Activated naive CD4-positive, alpha-beta T cell treated with anti-CD3 and anti-CD28 coated beads for 36 hours (primary cell): ENCODE measurements at regions of chrX and their contacts with region 1.

Region 1: GRCh38 chrX:119753571-119754257 is 4.7 kb upstream of the SOWAHD start:
- DNase-seq: peak; percentile 70
- H3K4me3 Mint-ChIP-seq: no peak overlapping the region
- H3K27ac Mint-ChIP-seq: peak overlapping the region; percentile 81
- H3K4me1 Mint-ChIP-seq: peaks cover 41% of the 10 kb centered on the region
- H3K27me3 Mint-ChIP-seq: no peaks in the 10 kb centered on the region

Region 2: GRCh38 chrX:119130911-119131310 is 622.8 kb before region 1 on chrX:
- CTCF ChIA-PET with region 1: no interaction called
- intact Hi-C with region 1: no loop called
- DNase-seq: no peak
- H3K4me3 Mint-ChIP-seq: no peak overlapping the region
- H3K27ac Mint-ChIP-seq: no peak overlapping the region
- H3K4me1 Mint-ChIP-seq: no peaks in the 10 kb centered on the region
- H3K27me3 Mint-ChIP-seq: no peaks in the 10 kb centered on the region

Region 3: DNA sequence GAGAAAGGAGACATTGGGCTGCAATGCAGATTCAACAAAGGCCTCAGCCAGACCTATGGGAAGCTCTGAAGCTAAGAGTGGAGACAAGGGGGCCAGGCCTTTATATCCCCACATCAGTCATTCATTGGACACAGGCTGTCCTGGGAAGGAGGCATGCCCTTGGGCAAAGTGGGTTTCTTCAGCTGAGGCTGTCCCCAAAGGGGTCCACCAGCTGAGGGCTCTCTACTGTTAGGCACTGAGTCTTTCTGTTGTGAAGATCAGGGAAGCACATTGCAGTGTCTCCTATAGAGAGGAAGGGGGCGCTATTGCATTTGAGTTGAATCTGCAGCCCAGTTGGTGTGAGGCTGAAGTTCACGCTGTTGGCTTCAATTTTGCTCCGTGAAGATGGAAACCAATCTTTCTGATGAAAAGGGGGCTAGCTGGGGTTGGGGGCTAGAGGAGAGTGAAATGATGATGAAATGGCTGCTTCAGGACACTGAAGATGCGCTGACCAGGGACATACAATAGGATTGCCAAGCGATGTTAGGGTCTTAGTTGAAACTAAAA is 237.5 kb before region 1 on chrX:
- CTCF ChIA-PET with region 1: interaction called, 5 read pairs
- intact Hi-C with region 1: loop called (anchors 1 kb)
- DNase-seq: peak; percentile 45
- H3K4me3 Mint-ChIP-seq: no peak overlapping the region
- H3K27ac Mint-ChIP-seq: no peak overlapping the region
- H3K4me1 Mint-ChIP-seq: no peaks in the 10 kb centered on the region
- H3K27me3 Mint-ChIP-seq: no peaks in the 10 kb centered on the region

Region 4: DNA sequence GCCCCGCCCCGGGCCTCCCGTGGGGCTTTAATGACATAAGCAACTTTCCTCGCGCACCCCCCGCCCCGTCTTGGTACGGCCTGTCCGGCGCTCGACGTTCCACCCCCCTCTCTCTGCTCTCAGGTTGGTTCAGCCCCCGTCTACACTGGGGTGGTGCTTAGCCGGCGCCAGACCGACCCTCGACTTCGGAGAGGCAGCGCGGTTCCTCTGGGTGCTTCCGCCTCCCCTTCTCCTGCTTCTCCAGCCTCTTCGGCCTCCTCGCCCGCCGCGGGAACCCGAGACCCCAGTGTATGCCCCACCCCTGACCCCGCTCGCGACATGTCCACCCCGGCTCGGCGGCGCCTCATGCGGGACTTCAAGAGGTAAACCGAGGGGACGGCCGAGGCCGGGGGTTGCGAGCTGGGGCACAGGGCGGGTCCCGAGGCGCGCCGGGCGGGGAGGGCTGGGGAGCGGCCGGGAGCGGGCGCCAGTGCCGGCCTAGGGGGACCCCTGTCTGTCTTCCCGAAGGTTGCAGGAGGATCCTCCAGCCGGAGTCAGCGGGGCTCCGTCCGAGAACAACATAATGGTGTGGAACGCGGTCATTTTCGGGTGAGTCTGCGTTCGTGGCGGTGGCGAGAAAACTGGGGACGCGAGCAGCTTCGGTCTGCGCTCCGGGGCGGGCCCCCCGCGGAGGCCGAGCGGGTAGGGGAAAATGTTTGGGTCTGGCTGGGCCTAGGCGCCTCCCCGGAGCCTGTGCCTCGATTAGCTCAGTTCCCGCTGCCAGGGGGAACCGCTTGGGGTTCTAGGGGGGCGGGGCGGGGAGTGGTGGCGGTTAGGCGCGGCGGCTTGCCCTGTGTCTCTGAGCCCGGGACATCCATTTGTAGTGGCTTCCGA is 179.1 kb before region 1 on chrX and contains the start of gene UBE2A:
- CTCF ChIA-PET with region 1: no interaction called
- intact Hi-C with region 1: loop called (anchors 1 kb)
- DNase-seq: peak; percentile 89
- H3K4me3 Mint-ChIP-seq: peak within 1 kb of the TSS; percentile 91
- H3K27ac Mint-ChIP-seq: peak within 1 kb of the TSS; percentile 89
- H3K4me1 Mint-ChIP-seq: peaks cover 12% of the 10 kb centered on the region
- H3K27me3 Mint-ChIP-seq: no peaks in the 10 kb centered on the region
- total RNA-seq, gene UBE2A: 46.1 to 49.8 TPM

Region 5: DNA sequence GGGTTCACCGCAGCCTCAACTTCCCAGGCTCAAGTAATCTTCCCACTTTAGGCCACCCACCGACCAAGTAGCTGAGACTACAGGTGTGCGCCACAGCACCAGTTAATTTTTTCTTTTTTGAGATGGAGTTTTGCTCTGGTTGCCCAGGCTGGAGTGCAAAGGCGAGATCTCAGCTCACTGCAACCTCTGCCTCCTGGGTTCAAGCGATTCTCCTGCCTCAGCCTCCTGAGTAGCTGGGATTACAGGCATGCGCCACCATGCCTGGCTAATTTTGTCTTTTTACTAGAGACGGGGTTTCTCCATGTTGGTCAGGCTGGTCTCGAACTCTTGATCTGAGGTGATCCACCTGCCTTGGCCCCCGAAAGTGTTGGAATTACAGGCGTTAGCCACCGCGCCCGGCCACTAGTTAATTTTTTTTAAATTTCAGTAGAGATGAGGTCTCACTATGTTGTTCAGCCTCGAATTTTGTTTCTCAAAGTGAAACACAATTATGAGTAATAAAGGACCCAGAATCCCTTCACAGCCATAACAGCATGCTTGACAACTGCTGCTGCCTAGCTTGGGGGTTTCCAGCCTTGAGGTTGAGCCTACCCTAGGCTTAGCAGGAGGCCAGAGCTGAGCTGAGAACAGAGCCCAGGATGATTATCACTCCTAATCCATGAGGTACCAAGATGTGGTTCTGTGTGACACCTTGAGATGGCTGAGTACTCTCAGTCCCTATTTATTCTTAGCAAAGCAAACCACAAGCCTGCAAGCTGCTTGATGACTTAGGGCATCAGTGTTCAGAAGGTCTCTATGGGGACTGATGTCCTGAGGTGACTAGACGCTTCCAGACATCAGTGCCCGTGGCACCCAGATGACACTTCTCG is 105.9 kb before region 1 on chrX:
- CTCF ChIA-PET with region 1: no interaction called
- intact Hi-C with region 1: loop called (anchors 1 kb)
- DNase-seq: peak; percentile 84
- H3K4me3 Mint-ChIP-seq: no peak overlapping the region
- H3K27ac Mint-ChIP-seq: peak overlapping the region; percentile 89
- H3K4me1 Mint-ChIP-seq: peaks cover 32% of the 10 kb centered on the region
- H3K27me3 Mint-ChIP-seq: no peaks in the 10 kb centered on the region

Region 6: GRCh38 chrX:119698845-119699244 is 54.9 kb before region 1 on chrX:
- CTCF ChIA-PET with region 1: interaction called, 3 read pairs
- intact Hi-C with region 1: loop called (anchors 1 kb)
- DNase-seq: no peak
- H3K4me3 Mint-ChIP-seq: no peak overlapping the region
- H3K27ac Mint-ChIP-seq: no peak overlapping the region
- H3K4me1 Mint-ChIP-seq: peaks cover 4% of the 10 kb centered on the region
- H3K27me3 Mint-ChIP-seq: no peaks in the 10 kb centered on the region

Region 7: DNA sequence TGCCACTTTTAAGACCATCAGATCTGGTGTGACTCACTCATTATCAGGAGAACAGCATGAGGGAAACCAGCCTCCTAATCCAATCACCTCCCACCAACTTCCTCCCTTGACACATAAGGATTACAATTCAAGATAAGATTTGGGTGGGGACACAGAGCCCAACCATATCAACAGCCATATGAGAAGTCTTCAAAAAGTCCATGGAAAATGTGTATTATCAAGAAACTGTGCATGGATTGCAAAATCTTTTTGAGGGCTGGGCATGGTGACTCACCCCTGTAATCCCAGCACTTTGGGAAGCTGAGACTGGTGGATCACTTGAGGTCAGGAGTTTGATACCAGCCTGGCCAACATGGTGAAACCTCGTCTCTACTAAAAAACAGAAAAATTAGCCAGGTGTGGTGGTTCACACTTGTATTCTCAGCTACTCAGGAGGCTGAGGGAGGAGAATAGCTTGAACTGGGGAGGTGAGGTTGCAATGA is 55.5 kb after region 1 on chrX:
- CTCF ChIA-PET with region 1: no interaction called
- intact Hi-C with region 1: no loop called
- DNase-seq: no peak
- H3K4me3 Mint-ChIP-seq: no peak overlapping the region
- H3K27ac Mint-ChIP-seq: no peak overlapping the region
- H3K4me1 Mint-ChIP-seq: no peaks in the 10 kb centered on the region
- H3K27me3 Mint-ChIP-seq: no peaks in the 10 kb centered on the region

Region 8: DNA sequence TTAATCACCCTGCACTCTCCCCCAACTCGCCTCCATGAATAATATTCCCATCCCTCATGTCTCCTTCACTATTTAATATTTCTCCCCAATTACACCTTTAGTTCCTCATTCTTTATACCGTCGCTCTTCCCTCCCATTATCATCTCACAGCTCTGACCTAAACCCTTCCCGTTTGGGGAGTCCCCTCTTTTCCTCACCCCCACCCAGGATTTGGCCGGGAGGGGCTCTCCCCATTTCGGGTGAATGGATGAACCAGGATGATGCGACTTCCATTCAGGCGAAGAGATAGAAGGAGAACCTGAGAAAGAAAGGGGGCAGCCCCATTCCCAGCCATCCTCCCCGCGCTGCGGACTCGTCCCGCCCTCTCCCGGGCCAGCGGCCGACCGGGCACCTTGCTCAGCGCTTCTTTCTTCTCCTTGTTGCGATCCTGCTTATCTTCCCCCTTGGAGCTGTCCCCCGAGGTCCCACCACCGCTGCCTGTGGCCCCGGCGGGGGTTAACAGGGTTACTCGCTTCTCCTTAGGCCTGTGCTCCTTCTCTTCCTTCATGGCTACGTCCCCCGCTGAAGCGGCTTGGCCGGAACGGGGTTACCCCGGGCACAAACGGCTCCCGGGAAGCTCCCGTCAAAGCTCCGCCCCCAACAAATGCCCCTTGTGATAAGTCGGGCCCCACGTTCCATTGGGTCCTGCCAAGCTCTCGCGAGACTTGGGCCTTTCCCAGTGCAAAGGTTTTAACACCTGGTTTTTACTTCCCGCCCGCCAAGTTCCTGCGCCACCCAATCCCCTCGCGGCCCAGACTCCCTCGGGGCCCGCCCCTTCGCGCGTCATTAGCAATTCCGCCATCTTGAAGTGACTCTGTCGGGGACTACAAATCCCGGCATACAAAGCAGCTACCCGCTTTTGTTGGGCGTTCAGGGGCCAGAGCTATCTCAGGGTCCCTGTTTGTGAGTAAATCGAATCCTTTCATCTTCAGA is 99.0 kb after region 1 on chrX and contains the start of gene UPF3B:
- CTCF ChIA-PET with region 1: no interaction called
- intact Hi-C with region 1: loop called (anchors 1 kb)
- DNase-seq: peak; percentile 97
- H3K4me3 Mint-ChIP-seq: peak within 1 kb of the TSS; percentile 98
- H3K27ac Mint-ChIP-seq: peak within 1 kb of the TSS; percentile 97
- H3K4me1 Mint-ChIP-seq: peaks cover 8% of the 10 kb centered on the region
- H3K27me3 Mint-ChIP-seq: no peaks in the 10 kb centered on the region
- total RNA-seq, gene UPF3B: 21.5 to 22.2 TPM

Region 9: DNA sequence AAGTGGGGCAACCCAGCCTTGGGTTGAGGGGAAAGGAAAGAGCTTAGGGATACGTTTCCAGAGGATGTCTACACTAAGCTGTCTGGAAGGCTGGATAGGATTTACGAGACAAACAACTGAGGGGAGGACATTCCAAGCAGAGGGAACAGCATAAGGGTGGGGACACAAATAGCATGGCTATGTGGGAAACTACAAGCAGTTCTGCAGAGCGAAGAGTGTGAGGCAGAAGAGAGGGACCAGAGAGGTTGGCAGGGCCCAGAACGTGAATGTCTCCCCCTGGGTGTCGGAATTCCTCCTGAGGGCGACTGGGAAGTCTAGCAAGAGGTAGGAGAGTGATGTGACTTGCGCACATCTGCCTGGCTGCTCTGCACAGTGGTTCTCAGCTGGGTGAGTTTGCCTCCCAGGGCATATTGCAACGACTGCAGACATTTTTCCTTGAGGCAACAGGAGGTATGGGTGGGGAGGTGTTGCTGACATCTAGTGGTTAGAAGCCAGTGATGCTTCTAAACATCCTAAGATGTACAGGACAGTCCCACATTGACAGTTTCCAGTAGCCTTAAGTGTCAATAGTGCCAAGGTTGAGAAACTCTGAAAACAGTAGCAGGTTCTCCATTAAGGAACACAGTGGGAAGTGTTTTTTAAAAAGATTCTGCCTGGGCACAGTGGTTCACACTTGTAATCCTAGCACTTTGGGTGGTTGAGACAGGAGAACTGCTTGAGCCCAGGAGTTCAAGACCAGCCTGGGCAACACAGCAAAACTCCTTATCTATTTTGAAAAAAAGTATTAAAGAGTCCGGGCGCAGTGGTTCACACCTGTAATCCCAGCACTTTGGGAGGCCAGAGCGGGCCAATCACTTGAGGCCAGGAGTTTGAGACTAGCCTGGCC is 127.1 kb after region 1 on chrX:
- CTCF ChIA-PET with region 1: interaction called, 5 read pairs
- intact Hi-C with region 1: loop called (anchors 1 kb)
- DNase-seq: peak; percentile 41
- H3K4me3 Mint-ChIP-seq: no peak overlapping the region
- H3K27ac Mint-ChIP-seq: no peak overlapping the region
- H3K4me1 Mint-ChIP-seq: peaks cover 15% of the 10 kb centered on the region
- H3K27me3 Mint-ChIP-seq: no peaks in the 10 kb centered on the region